Left ventricle myocardium superior (tissue), 1 donor: ENCODE measurements at regions of chr6 and their contacts with region 1.

Region 1: GRCh38 chr6:163416557-163417253 is 2.2 kb downstream of the QKI start:
- DNase-seq: no peak
- ATAC-seq: peak; percentile 1

Region 2: GRCh38 chr6:163180874-163181541 is 235.7 kb before region 1 on chr6:
- intact Hi-C with region 1: loop called (anchors 5 kb)
- DNase-seq: peak; percentile 87
- ATAC-seq: peak; percentile 97

Region 3: DNA sequence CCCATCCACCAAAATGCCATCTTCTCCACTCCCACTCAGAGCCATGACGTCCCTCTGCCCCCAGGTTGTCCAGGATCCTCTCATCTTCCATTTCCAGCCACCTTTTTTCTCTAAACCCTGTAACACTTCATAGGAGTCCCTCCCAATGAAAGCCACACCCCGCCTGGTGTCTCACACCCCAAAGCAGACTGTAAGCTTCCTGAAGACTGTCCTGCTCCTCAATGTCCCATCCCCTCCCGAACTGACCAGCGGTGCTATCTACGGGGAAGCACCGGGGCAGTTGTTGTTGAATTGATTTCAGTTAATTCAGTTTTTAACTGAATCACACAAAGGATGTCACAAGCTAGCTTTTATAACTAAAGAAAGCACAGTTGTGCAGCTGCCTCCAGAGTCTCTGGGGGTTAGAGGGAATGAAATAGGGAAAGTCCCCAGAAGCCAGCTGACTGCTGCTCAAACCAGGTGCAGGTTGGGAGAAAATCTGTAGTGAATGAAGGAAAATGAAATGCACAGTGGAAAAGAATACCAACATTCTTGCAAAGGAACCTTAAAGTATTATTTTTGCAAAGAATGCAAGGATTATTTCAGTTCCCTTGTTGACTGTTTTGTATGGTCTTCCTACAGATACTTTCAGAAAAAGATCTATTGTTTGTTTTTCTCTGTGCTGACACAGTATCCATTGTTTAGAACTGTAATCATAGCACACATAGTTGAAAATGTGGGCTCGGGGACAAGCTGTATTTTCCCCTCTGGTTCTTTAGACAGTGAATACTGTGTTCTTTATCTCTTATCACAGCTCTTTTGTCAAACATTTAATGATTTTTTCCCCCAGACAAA is 224.8 kb before region 1 on chr6:
- intact Hi-C with region 1: no loop called
- DNase-seq: no peak
- ATAC-seq: peak; percentile 41

Region 4: GRCh38 chr6:163466839-163467390 is 50.2 kb after region 1 on chr6:
- intact Hi-C with region 1: no loop called
- DNase-seq: no peak
- ATAC-seq: peak; percentile 16

Region 5: GRCh38 chr6:163956571-163957407 is 540.1 kb after region 1 on chr6:
- intact Hi-C with region 1: loop called (anchors 5 kb)
- DNase-seq: peak; percentile 85
- ATAC-seq: peak; percentile 85

Region 6: GRCh38 chr6:164106345-164106769 is 689.7 kb after region 1 on chr6:
- intact Hi-C with region 1: loop called (anchors 5 kb)
- DNase-seq: peak; percentile 86
- ATAC-seq: peak; percentile 54